ENCODE measurements at regions of chr11 and their contacts with region 1.

Region 1: DNA sequence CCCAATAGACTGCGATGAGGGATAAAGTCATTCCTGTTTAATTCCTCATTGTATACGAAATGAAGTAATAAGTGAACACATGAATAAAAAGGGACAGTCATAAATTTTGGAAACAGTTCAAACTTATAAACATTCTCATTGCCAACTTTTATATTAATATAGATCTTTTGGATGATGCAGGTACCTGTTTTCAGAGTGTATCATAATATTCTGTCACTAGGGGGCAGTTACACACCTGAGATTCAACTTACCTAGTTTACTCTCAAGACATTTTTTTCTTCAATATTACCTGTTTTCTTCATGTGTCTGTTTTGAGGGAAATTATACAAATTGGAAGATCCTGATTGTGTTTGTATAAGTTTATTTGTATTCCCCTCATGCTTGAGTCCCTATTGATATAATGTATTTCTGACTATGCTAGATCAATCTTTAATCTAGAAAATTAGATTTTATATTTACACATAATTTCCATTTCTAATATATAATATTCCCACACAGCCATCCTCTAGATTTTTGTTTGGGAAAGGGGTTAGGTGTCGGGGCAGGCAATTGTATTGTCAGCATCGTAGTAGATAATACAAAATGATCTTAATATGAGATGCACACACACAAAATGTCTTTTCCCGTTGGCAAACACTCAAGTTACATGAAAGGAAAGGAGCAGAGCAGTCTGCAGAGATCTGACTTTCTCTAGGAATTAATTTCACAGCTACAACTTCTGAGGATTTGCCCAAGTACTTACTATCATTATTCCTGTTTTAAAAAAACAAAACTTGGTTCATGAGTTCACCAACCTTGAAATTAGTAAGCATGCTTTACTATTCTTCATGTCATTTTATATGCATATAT is 18.4 kb downstream of the FDX1 start:
- DNase-seq: no peak
- ATAC-seq: no peak
- H3K4me3 ChIP-seq: no peak overlapping the region
- H3K27ac ChIP-seq: no peak overlapping the region
- H3K4me1 ChIP-seq: no peaks in the 10 kb centered on the region
- H3K27me3 ChIP-seq: no peaks in the 10 kb centered on the region
- CTCF ChIP-seq: peak in 6 of 7 experiments; percentile 26 to 52 (median 47)
- POLR2A ChIP-seq: no peak

Region 2: GRCh38 chr11:110243791-110244190 is 204.3 kb before region 1 on chr11:
- intact Hi-C with region 1: no loop called
- DNase-seq: no peak
- ATAC-seq: no peak
- H3K4me3 ChIP-seq: no peak overlapping the region
- H3K27ac ChIP-seq: no peak overlapping the region
- H3K4me1 ChIP-seq: no peaks in the 10 kb centered on the region
- H3K27me3 ChIP-seq: no peaks in the 10 kb centered on the region
- CTCF ChIP-seq: no peak
- POLR2A ChIP-seq: no peak

Region 3: DNA sequence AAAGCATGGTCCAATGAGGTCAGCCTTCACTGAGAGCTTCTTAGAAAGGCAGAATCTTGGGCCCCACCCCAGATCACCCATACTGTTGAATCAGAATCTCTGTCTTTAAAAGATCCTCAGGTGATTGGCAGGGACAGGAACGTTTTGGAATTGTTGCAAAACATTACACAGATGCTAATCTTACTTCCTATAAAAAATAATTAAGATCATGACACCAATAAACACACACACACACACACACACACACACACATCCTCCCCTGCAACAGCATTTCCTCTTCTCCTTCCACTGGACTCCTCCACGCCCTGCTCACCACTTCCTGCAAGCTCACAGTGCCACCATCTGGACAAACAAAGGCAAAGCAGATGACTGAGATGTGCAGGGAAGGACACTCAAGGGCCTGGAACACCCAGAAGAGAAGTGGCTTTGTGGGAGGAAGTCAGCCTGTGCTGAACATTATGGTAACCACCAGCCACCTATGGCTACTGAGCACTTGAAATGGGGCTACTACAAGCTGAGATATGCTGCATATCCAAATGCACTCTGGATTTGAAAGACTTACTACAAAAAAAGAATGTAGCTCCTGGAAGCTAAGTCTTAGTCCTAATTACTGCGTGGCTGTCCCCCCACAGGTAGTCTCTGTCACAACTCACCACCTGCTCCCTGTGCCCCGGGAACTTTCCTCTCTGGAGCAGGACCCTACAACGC is 998.4 kb after region 1 on chr11:
- intact Hi-C with region 1: loop called (anchors 10 kb)
- DNase-seq: peak; percentile 72 to 90 (median 82)
- ATAC-seq: peak; percentile 95
- H3K4me3 ChIP-seq: no peak overlapping the region
- H3K27ac ChIP-seq: no peak overlapping the region
- H3K4me1 ChIP-seq: peaks cover 2% of the 10 kb centered on the region
- H3K27me3 ChIP-seq: no peaks in the 10 kb centered on the region
- CTCF ChIP-seq: peak; percentile 49 to 98 (median 90)
- POLR2A ChIP-seq: no peak